ENCODE measurements at regions of chrX and their contacts with region 1.

Region 1: GRCh38 chrX:47581731-47582647 is at the start of gene TIMP1:
- DNase-seq: peak; percentile 88 to 93 (median 90)
- H3K4me3 ChIP-seq: peak within 1 kb of the TSS; percentile 47 to 79 (median 74)
- H3K4me3 Mint-ChIP-seq: peak within 1 kb of the TSS; percentile 81 to 87
- H3K27ac ChIP-seq: peak within 1 kb of the TSS; percentile 65 to 86
- H3K27ac Mint-ChIP-seq: peak within 1 kb of the TSS; percentile 82 to 98 (median 95)
- H3K4me1 ChIP-seq: peaks cover 45 to 69% of the 10 kb centered on the region in 2 donors
- H3K4me1 Mint-ChIP-seq: peaks cover 61% of the 10 kb centered on the region
- H3K27me3 ChIP-seq: no peaks in the 10 kb centered on the region
- H3K27me3 Mint-ChIP-seq: peaks cover 0 to 5% (median under 1%) of the 10 kb centered on the region in 3 donors
- CTCF ChIP-seq: no peak
- polyA plus RNA-seq, gene TIMP1: 591 to 682 (median 632) TPM

Region 2: GRCh38 chrX:47327902-47328301 is 254.1 kb before region 1 on chrX:
- intact Hi-C with region 1: no loop called
- DNase-seq: no peak
- H3K4me3 ChIP-seq: no peak overlapping the region
- H3K4me3 Mint-ChIP-seq: no peak overlapping the region
- H3K27ac ChIP-seq: no peak overlapping the region
- H3K27ac Mint-ChIP-seq: peak overlapping the region in 2 of 7 donors; percentile 26 to 71
- H3K4me1 ChIP-seq: peaks cover 0 to 4% of the 10 kb centered on the region in 2 donors
- H3K4me1 Mint-ChIP-seq: peaks cover 10% of the 10 kb centered on the region
- H3K27me3 ChIP-seq: no peaks in the 10 kb centered on the region
- H3K27me3 Mint-ChIP-seq: peaks cover 0 to 10% (median 0%) of the 10 kb centered on the region in 3 donors
- CTCF ChIP-seq: no peak

Region 3: GRCh38 chrX:47619486-47620302 is 37.7 kb after region 1 on chrX and contains the start of gene SYN1:
- intact Hi-C with region 1: loop called in 1 of 2 experiments (anchors 5 kb)
- DNase-seq: peak; percentile 78 to 91 (median 81)
- H3K4me3 ChIP-seq: peak within 1 kb of the TSS in 1 of 3 experiments; percentile 51
- H3K4me3 Mint-ChIP-seq: peak within 1 kb of the TSS in 1 of 2 donors; percentile 71
- H3K27ac ChIP-seq: no peak within 1 kb of the TSS
- H3K27ac Mint-ChIP-seq: no peak within 1 kb of the TSS
- H3K4me1 ChIP-seq: peaks cover 13 to 21% of the 10 kb centered on the region in 2 donors
- H3K4me1 Mint-ChIP-seq: peaks cover 18% of the 10 kb centered on the region
- H3K27me3 ChIP-seq: peaks cover 0 to 4% of the 10 kb centered on the region in 2 donors
- H3K27me3 Mint-ChIP-seq: peaks cover 9 to 21% (median 13%) of the 10 kb centered on the region in 3 donors
- CTCF ChIP-seq: no peak
- polyA plus RNA-seq, gene SYN1: 0.11 to 4.0 (median 0.29) TPM

Region 4: GRCh38 chrX:47628980-47629379 is 47.0 kb after region 1 on chrX:
- intact Hi-C with region 1: loop called (anchors 5 kb)
- DNase-seq: peak in 1 of 3 donors; percentile 54
- H3K4me3 ChIP-seq: peak overlapping the region; percentile 70 to 90 (median 79)
- H3K4me3 Mint-ChIP-seq: peak overlapping the region; percentile 82 to 92
- H3K27ac ChIP-seq: peak overlapping the region; percentile 88 to 96
- H3K27ac Mint-ChIP-seq: peak overlapping the region in 6 of 7 donors; percentile 73 to 95 (median 83)
- H3K4me1 ChIP-seq: peaks cover 87 to 92% of the 10 kb centered on the region in 2 donors
- H3K4me1 Mint-ChIP-seq: peaks cover 64% of the 10 kb centered on the region
- H3K27me3 ChIP-seq: no peaks in the 10 kb centered on the region
- H3K27me3 Mint-ChIP-seq: peaks cover 0 to 3% (median 2%) of the 10 kb centered on the region in 3 donors
- CTCF ChIP-seq: no peak

Measured in CD14-positive monocyte (primary cell).